Breast epithelium (tissue), 4 donors: ENCODE measurements at regions of chr6 and their contacts with region 1.

Region 1: GRCh38 chr6:159577564-159577963 is 115.5 kb downstream of the SOD2 start:
- DNase-seq: no peak
- H3K4me3 ChIP-seq: no peak overlapping the region
- H3K27ac ChIP-seq: no peak overlapping the region
- H3K4me1 ChIP-seq: no peaks in the 10 kb centered on the region
- H3K27me3 ChIP-seq: no peaks in the 10 kb centered on the region
- CTCF ChIP-seq: no peak
- POLR2A ChIP-seq: no peak

Region 2: GRCh38 chr6:159639721-159640120 is 62.2 kb after region 1 on chr6:
- intact Hi-C with region 1: loop called (anchors 5 kb)
- DNase-seq: no peak
- H3K4me3 ChIP-seq: no peak overlapping the region
- H3K27ac ChIP-seq: no peak overlapping the region
- H3K4me1 ChIP-seq: no peaks in the 10 kb centered on the region
- H3K27me3 ChIP-seq: no peaks in the 10 kb centered on the region
- CTCF ChIP-seq: no peak
- POLR2A ChIP-seq: no peak